Panc1 (cell line): ENCODE measurements at regions of chr17 and their contacts with region 1.

Region 1: DNA sequence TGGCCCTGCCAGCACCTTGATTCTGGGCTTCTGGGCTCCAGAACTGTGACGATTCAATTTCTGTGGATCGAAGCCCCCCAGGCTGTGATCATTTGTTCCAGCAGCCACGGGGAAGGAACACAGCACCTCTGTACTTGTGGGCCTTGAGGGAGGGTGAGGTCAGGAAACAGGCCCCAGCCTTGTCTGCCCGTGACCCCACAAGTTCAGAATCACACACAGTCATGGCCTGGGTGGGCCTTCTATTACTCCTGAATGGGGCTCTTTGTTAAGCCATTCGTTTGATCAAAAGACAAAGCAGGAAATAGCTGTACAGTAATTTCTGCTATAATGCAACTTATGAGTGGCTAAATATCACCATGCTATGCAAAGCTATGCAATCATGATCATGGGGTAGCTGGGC is 10.1 kb downstream of the ST6GALNAC2 start:
- DNase-seq: no peak
- ATAC-seq: no peak
- H3K4me3 ChIP-seq: no peak overlapping the region
- H3K27ac ChIP-seq: no peak overlapping the region
- H3K4me1 ChIP-seq: peaks cover 3% of the 10 kb centered on the region
- H3K27me3 ChIP-seq: no peaks in the 10 kb centered on the region
- CTCF ChIP-seq: no peak

Region 2: GRCh38 chr17:76816590-76817135 is 241.1 kb after region 1 on chr17:
- CTCF ChIA-PET with region 1: interaction called, 11 read pairs
- POLR2A ChIA-PET with region 1: no interaction called
- in situ Hi-C with region 1: no loop called
- intact Hi-C with region 1: no loop called
- DNase-seq: peak; percentile 24
- ATAC-seq: peak; percentile 87
- H3K4me3 ChIP-seq: no peak overlapping the region
- H3K27ac ChIP-seq: no peak overlapping the region
- H3K4me1 ChIP-seq: no peaks in the 10 kb centered on the region
- H3K27me3 ChIP-seq: no peaks in the 10 kb centered on the region
- CTCF ChIP-seq: peak; percentile 93